Left ventricle myocardium inferior (tissue), 1 donor: ENCODE measurements at regions of chr15 and their contacts with region 1.

Region 1: GRCh38 chr15:62071711-62072308 is 5.0 kb downstream of the C2CD4A start:
- DNase-seq: no peak
- H3K4me3 ChIP-seq: no peak overlapping the region
- H3K27ac ChIP-seq: no peak overlapping the region
- H3K4me1 ChIP-seq: peaks cover 24% of the 10 kb centered on the region
- H3K27me3 ChIP-seq: no peaks in the 10 kb centered on the region
- CTCF ChIP-seq: peak; percentile 77

Region 2: DNA sequence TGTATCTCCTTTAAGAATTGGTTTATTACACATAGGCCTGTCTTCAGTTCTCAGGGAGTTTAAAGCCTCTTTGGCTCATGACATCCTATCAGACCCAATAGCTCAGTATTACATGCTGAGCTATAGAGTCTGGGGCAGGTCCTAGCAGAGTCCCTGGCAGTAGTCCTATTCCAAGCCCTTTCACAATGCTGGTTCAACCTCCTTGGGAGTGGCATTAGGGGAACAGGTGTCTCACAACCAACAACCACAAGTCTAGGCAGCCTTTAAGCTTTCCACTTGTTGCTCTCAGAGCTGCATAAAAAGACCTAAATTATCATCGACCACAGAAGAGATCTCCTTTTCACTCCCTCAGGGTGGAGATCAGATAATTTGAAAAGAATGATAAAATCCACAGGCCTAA is 116.1 kb after region 1 on chr15:
- intact Hi-C with region 1: no loop called
- DNase-seq: no peak
- H3K4me3 ChIP-seq: no peak overlapping the region
- H3K27ac ChIP-seq: peak overlapping the region; percentile 41
- H3K4me1 ChIP-seq: peaks cover 8% of the 10 kb centered on the region
- H3K27me3 ChIP-seq: peaks cover 9% of the 10 kb centered on the region
- CTCF ChIP-seq: no peak

Region 3: DNA sequence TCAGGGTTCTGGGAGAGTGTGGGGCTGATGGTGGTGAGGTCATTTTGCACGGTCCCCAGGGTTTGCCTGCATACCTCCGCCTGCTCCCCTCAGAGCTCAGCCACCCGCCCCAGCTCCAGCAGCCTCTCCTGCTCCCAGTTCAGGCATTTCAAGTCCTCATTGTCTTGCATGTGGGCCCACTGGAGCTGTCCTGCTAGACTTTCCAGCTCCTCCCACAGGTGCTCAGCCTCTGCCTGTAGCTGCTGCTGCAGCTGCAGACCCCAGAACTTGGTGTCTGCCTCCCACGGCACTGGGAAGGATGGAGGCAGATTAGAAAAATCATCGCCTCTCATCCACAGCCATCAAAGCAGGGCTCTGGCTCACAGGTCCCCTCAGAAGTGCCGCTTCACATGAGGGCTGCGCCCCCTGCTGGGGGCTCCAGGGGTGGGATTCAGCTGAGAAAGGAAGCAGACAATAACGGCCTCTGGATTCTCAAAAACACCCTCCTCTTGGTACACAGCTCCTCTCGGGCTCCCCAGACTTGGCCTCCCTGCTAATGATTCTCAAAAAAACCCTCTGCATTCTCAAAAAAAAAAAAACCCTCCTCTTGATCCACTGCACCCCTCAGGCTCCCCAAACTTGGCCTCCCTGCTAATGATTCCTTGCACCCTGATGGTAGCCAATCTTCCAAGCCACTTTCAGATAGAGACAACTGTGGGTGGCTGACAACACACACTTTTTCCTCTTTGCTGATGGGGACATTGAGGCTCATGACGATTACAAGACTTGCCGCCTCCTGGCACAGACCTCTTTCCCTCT is 182.5 kb after region 1 on chr15:
- intact Hi-C with region 1: loop called (anchors 10 kb)
- DNase-seq: peak; percentile 61
- H3K4me3 ChIP-seq: no peak overlapping the region
- H3K27ac ChIP-seq: no peak overlapping the region
- H3K4me1 ChIP-seq: no peaks in the 10 kb centered on the region
- H3K27me3 ChIP-seq: no peaks in the 10 kb centered on the region
- CTCF ChIP-seq: peak; percentile 76